ENCODE measurements at regions of chr10 and their contacts with region 1.

Region 1: DNA sequence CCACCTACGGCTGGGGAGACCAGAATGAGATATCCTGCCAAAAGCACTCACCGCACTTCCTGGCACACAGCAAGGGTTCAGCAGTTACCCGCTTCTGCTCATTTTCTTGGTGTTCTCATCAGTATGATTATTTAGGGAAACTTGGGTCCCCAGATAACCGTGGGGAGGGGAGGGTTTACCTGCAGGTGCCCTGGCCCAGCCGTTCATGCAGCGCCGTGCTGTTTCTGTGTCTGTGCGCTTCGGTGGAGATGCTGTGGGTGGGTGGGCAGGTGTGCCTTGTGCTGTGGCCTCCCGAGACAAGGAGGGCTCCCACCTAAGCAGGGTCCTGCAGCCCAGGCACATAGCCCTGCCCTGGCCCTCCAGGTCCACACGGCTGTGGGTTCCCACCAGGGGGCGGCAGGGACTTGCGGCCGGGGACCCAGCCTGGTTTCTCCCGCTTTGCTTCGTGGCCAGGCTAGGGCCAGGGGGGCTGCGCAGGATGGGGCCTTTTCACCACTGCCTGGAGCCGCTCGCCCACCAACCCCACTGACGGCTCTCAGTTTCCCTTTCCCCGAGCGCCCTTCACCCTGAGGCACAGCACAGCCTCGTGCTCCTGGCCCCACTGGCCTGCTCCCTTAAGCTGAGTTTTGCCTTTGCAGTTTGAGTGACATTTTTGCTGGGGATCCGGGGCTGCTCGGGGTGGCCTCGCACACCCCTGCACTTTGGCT is 78.5 kb downstream of the LHPP start:
- DNase-seq: no peak
- ATAC-seq: peak; percentile 94
- H3K4me3 ChIP-seq: no peak overlapping the region
- H3K27ac ChIP-seq: no peak overlapping the region
- H3K4me1 ChIP-seq: peaks cover 3% of the 10 kb centered on the region; the same call in 1 of the 2 replicates
- H3K27me3 ChIP-seq: no peaks in the 10 kb centered on the region; a peak in 1 of 4 replicates
- CTCF ChIP-seq: peak; percentile 65 to 92 (median 83)
- EP300 ChIP-seq: no peak
- POLR2A ChIP-seq: no peak
- RAD21 ChIP-seq: peak; percentile 94

Region 2: GRCh38 chr10:123096452-123096851 is 1443.6 kb before region 1 on chr10:
- CTCF ChIA-PET with region 1: no interaction called
- POLR2A ChIA-PET with region 1: no interaction called
- RAD21 ChIA-PET with region 1: no interaction called
- SMC1A ChIA-PET with region 1: no interaction called
- in situ Hi-C with region 1: no loop called
- intact Hi-C with region 1: no loop called
- DNase-seq: no peak
- ATAC-seq: no peak
- H3K4me3 ChIP-seq: no peak overlapping the region
- H3K27ac ChIP-seq: no peak overlapping the region
- H3K4me1 ChIP-seq: no peaks in the 10 kb centered on the region
- H3K27me3 ChIP-seq: peaks cover 0 to 2% of the 10 kb centered on the region in 2 experiments; a peak in 2 of 4 replicates
- CTCF ChIP-seq: no peak
- EP300 ChIP-seq: no peak
- POLR2A ChIP-seq: no peak
- RAD21 ChIP-seq: no peak

Region 3: GRCh38 chr10:124470544-124471434 is 69.3 kb before region 1 on chr10:
- CTCF ChIA-PET with region 1: no interaction called
- POLR2A ChIA-PET with region 1: no interaction called
- RAD21 ChIA-PET with region 1: no interaction called
- SMC1A ChIA-PET with region 1: no interaction called
- in situ Hi-C with region 1: no loop called
- intact Hi-C with region 1: no loop called
- DNase-seq: no peak
- ATAC-seq: no peak
- H3K4me3 ChIP-seq: no peak overlapping the region
- H3K27ac ChIP-seq: no peak overlapping the region
- H3K4me1 ChIP-seq: peaks cover 2% of the 10 kb centered on the region
- H3K27me3 ChIP-seq: no peaks in the 10 kb centered on the region
- CTCF ChIP-seq: no peak
- EP300 ChIP-seq: no peak
- POLR2A ChIP-seq: no peak
- RAD21 ChIP-seq: no peak

Region 4: GRCh38 chr10:124748166-124748565 is 208.1 kb after region 1 on chr10:
- CTCF ChIA-PET with region 1: interaction called, 149 read pairs
- POLR2A ChIA-PET with region 1: interaction called, 3 read pairs
- RAD21 ChIA-PET with region 1: interaction called, 67 read pairs
- SMC1A ChIA-PET with region 1: interaction called, 67 read pairs
- in situ Hi-C with region 1: loop called (anchors 5 kb)
- intact Hi-C with region 1: no loop called
- DNase-seq: no peak
- ATAC-seq: no peak
- H3K4me3 ChIP-seq: no peak overlapping the region
- H3K27ac ChIP-seq: no peak overlapping the region
- H3K4me1 ChIP-seq: peaks cover 4% of the 10 kb centered on the region; the same call in 1 of the 2 replicates
- H3K27me3 ChIP-seq: no peaks in the 10 kb centered on the region
- CTCF ChIP-seq: no peak
- EP300 ChIP-seq: no peak
- POLR2A ChIP-seq: no peak
- RAD21 ChIP-seq: no peak